ENCODE measurements at regions of chr1 and their contacts with region 1.

Region 1: GRCh38 chr1:33472349-33472980 is at the start of gene ZSCAN20:
- DNase-seq: peak; percentile 87
- CTCF ChIP-seq: no peak

Region 2: GRCh38 chr1:33295450-33296081 is 176.9 kb before region 1 on chr1:
- in situ Hi-C with region 1: loop called (anchors 10 kb)
- DNase-seq: peak; percentile 92
- CTCF ChIP-seq: peak; percentile 94

Region 3: DNA sequence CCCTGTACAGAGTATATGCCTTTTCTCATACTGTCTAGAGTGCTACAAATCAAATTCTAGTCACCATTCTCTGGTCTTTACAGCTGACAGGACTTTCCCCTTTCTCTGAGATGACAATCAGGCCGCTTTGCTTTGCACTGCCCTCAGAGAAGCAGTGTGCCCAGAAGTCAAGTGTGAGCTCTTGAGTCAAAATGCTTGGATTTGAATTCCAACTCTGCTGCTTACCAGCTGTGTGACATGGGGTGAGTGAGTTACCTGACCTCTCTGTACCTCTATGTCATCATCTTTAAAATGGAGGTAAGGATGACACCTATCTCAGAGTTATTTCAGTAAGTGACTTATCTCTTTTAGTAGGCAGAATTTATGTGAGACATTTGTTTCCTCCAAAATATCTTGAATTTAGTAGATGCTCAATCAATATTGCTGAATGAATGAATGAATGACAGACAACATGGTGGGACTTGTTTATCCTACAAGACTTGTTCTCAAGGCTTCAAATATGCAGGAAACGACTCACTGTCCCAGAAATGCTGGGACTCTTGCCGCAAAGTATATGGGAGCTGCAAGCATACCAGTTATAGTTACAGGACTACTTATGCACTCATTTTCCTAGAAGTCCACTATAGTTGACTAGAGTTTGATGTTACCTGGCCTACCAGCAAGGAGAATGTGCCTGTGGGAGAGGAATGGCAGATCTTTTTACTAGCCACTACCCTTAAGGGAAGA is 113.5 kb before region 1 on chr1:
- in situ Hi-C with region 1: no loop called
- DNase-seq: no peak
- CTCF ChIP-seq: no peak

Region 4: DNA sequence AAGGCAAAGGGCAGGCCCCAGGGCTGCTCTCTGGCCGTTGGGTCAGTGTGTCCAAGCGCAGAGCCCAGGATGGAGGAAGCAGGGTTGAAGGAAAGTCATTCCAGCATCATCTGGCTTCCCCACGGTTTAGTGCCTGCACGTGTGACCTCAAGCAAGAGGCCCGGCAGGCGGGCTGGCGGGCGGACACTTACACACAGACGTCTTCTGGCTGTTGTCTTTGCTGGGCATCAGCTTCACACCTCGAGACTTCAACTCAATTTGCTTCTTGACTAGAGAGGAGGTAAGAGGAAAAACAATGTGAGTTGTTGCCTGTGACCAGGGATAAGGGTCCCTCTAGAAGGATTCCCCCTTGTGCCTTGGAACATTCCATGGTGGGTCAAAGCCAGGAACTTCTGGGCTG is 353.0 kb after region 1 on chr1:
- in situ Hi-C with region 1: no loop called
- DNase-seq: no peak
- CTCF ChIP-seq: no peak